Caco-2 (cell line): ENCODE measurements at regions of chrX and their contacts with region 1.

Region 1: DNA sequence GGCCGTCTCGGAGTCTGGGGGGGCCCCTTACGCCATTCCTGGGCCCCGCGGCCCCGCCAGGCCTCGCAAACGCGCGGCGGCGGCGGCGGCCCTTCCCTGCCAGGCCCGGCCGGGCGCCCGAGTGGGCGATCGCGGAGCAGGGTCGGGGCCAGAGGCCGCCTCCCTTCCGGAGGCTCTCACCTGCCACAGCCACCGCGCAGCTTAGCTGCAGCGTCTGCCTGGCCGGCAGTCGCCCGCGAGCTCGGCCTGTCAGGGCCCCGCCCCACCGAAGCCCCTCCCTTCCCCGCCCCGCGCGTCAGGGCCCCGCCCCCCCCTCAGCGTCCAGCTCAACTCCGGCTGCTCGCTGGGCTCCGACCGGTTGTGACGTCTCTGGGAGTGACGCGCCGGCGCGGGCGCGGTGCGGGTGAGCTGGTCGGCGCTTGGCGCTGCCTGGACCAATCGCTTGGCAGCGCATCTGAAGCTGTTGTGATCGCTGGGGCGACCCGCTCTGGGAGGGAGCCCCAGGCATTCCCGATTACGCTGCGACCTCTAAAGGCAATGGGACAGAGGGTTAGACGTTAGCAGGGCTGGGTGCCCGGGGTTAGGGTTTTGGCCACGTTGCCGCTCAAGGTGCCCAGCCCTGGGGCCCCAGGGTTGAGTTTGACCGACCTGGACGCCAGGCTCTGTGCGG is at the start of gene SLC10A3:
- DNase-seq: peak; percentile 94 to 95
- H3K4me3 ChIP-seq: peak within 1 kb of the TSS; percentile 57
- H3K4me3 Mint-ChIP-seq: peak within 1 kb of the TSS; percentile 73
- H3K27ac Mint-ChIP-seq: peak within 1 kb of the TSS; percentile 92
- H3K4me1 ChIP-seq: peaks cover 4% of the 10 kb centered on the region; the same call in 1 of the 2 replicates
- H3K4me1 Mint-ChIP-seq: peaks cover 6% of the 10 kb centered on the region
- H3K27me3 ChIP-seq: no peaks in the 10 kb centered on the region
- H3K27me3 Mint-ChIP-seq: no peaks in the 10 kb centered on the region
- CTCF ChIP-seq: peak in 1 of 2 experiments; percentile 15
- total RNA-seq, gene SLC10A3: 19.6 and 22.5 TPM in 2 replicates

Region 2: DNA sequence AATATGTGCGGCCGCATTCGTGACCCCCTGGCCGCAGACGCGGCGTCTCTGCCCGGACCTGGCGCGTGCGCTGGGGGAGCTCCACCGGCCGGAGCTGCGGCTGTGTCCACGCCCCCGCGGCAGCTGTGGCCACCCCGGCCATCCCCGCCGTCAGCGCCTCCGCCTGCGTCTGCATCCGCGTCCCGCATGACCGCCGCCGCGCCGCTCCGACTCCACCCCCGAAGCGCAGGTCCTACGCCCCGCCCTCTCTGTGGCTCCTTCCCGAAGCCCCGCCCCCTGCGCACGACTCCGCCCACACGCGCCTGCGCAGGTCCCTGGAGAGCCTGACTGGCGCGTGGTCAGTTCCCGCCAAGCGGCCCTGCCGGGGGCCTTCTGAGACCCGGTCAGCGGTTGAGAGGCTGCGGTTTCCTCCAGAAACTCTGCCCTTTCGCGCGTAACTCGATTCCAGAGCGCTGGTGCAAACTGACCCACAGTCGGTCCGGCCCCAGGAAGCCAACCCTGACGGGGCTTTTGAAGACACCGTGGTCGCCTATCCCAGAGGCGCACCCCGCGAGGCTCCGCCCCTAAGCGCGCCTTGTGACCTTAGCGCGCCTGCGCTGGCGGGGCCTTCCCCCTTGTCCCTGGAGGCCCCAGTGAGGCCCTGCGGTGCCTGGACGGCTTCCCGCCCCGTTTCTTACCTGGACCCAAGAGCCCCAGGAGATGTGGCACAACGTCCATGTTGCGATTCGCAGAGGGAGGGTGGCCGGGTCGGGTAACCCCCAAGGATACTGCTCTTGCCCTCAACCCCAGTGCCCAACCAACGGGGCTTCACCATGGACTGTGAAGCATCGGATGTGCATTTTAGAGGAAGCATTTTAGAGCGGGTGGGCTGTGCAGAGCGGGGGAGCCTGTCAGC is 11.6 kb before region 1 on chrX and contains the start of gene LAGE3:
- CTCF ChIA-PET with region 1: interaction called, 3 read pairs
- POLR2A ChIA-PET with region 1: interaction called, 16 read pairs
- intact Hi-C with region 1: no loop called
- DNase-seq: peak; percentile 91 to 96
- H3K4me3 ChIP-seq: peak within 1 kb of the TSS; percentile 64
- H3K4me3 Mint-ChIP-seq: peak within 1 kb of the TSS; percentile 76
- H3K27ac Mint-ChIP-seq: peak within 1 kb of the TSS; percentile 86
- H3K4me1 ChIP-seq: no peaks in the 10 kb centered on the region
- H3K4me1 Mint-ChIP-seq: no peaks in the 10 kb centered on the region
- H3K27me3 ChIP-seq: no peaks in the 10 kb centered on the region
- H3K27me3 Mint-ChIP-seq: no peaks in the 10 kb centered on the region
- CTCF ChIP-seq: no peak
- total RNA-seq, gene LAGE3: 26.0 and 26.7 TPM in 2 replicates

Region 3: GRCh38 chrX:154534862-154535670 is 44.5 kb after region 1 on chrX:
- CTCF ChIA-PET with region 1: no interaction called
- POLR2A ChIA-PET with region 1: no interaction called
- intact Hi-C with region 1: loop called (anchors 2 kb)
- DNase-seq: peak; percentile 78 to 87
- H3K4me3 ChIP-seq: no peak overlapping the region
- H3K4me3 Mint-ChIP-seq: no peak overlapping the region
- H3K27ac Mint-ChIP-seq: no peak overlapping the region
- H3K4me1 ChIP-seq: peaks cover 5% of the 10 kb centered on the region; the same call in 1 of the 2 replicates
- H3K4me1 Mint-ChIP-seq: no peaks in the 10 kb centered on the region
- H3K27me3 ChIP-seq: no peaks in the 10 kb centered on the region
- H3K27me3 Mint-ChIP-seq: no peaks in the 10 kb centered on the region
- CTCF ChIP-seq: peak; percentile 91 to 94

Region 4: GRCh38 chrX:154603438-154604430 is 113.2 kb after region 1 on chrX:
- CTCF ChIA-PET with region 1: no interaction called
- POLR2A ChIA-PET with region 1: no interaction called
- intact Hi-C with region 1: no loop called
- DNase-seq: no peak
- H3K4me3 ChIP-seq: no peak overlapping the region
- H3K4me3 Mint-ChIP-seq: no peak overlapping the region
- H3K27ac Mint-ChIP-seq: no peak overlapping the region
- H3K4me1 ChIP-seq: no peaks in the 10 kb centered on the region
- H3K4me1 Mint-ChIP-seq: no peaks in the 10 kb centered on the region
- H3K27me3 ChIP-seq: no peaks in the 10 kb centered on the region
- H3K27me3 Mint-ChIP-seq: peaks cover 7% of the 10 kb centered on the region
- CTCF ChIP-seq: no peak